BJ (cell line): ENCODE measurements at regions of chr12 and their contacts with region 1.

Region 1: DNA sequence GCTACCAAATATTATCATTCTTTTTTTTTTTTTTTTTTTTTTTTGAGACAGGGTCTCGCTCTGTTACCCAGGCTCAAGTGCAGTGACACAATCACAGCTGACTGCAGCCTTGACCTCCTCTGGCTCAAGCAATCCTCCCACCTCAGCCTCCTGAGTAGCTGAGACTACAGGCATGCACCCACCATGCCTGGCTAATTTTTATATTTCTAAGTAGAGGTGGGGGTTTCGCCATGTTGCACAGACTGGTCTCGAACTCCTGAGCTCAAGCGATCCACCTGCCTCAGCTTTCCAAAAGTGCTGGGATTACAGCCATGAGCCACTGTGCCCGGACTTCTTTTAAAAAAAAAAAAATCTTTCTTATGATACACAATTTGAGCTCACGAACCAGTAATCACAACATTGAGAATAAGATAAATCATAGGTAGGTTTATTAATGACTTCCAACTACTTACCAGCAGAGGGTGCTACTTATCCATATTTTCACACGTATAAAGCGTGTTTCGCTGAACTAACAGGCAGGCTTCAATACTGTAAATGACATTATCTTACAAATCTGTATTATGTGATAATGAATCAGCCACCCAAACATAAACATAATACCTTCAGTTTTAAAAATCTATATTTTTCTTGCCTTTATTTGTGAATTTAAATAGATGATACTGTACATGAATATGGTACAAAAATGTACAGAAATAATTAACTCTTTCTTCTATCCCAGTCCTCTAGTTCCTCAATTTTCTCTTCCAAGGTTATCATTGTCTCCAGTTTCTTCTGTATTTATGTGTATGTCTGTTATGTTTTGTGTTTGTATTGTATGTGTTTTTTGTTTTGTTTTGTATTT is 42.5 kb upstream of the BCAT1 start:
- DNase-seq: no peak
- H3K4me3 ChIP-seq: no peak overlapping the region
- H3K27me3 ChIP-seq: peaks cover 1% of the 10 kb centered on the region; the same call in 1 of the 2 replicates
- CTCF ChIP-seq: peak; percentile 46

Region 2: GRCh38 chr12:25130741-25131188 is 139.3 kb after region 1 on chr12:
- CTCF ChIA-PET with region 1: interaction called, 15 read pairs
- POLR2A ChIA-PET with region 1: no interaction called
- DNase-seq: peak; percentile 4
- H3K4me3 ChIP-seq: no peak overlapping the region
- H3K27me3 ChIP-seq: peaks cover 2% of the 10 kb centered on the region; the same call in 1 of the 2 replicates
- CTCF ChIP-seq: peak; percentile 54

Region 3: DNA sequence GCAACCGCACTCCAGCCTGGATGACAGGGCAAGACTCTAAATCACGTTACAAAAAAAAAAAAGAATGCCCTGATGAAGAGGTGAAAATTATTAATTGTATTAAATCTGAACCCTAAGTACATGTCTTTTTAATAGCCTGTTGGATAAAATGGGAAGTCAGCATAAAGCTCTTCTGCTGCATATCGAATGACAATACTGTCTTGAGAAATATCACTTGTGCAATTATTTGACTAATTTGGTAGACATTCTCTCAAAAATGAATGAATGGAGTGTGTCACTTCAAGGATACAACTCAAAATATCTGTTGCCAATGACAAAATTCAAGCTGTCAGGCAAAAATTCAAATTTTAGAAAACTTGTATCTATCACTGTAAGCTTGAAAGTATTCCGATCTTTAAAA is 164.6 kb after region 1 on chr12:
- CTCF ChIA-PET with region 1: interaction called, 20 read pairs
- POLR2A ChIA-PET with region 1: no interaction called
- DNase-seq: no peak
- H3K4me3 ChIP-seq: no peak overlapping the region
- H3K27me3 ChIP-seq: no peaks in the 10 kb centered on the region
- CTCF ChIP-seq: no peak